ENCODE measurements at regions of chr2 and their contacts with region 1.

Region 1: DNA sequence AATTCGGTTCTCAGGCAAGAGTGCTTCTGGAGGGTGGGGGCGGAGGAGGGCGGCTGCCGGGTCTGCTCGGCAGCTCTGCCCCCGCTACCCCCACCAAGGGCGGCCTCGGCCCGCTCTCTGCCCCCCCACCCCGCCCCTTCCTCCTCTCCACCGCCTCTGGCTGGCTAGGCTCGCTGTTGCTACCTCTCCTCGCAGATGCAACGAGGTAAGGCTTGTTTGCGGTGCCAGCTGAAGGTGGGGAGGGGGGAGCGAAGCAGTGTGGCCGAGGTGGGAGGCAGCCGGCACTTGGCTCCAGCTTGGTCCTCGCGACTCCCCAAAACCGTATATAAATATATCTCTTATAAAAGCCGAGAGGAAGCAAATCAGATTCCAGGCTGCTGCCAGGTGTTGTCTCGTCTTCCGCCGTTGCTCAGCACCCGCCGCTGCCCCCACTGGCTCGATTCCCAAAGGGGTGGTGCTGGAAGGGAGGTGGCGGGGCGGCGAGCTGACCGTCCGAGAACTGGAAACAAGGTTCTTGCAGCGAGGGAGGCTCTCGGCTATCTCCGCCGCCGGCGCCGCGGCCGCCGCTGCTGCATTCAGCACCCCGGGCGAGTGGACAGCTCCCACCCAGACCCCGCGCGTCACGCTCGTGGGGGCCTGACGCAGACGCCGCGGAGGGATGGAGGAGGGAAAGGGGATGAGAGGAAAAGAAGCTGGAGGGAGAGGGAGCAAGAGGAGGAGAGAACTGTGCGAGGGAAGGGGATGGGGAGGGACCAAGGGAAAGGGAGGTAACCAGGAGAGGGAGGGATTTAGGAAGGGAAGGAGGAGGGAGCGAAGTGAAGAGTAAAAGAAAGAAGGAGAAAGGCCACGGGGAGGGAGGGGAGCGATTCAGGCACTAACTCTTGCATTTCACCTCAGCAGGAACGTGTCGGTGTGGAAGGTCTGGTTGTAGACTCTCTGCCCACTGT is at the start of gene MARCHF4:
- DNase-seq: peak; percentile 90
- ATAC-seq: peak; percentile 76
- H3K4me3 ChIP-seq: peak within 1 kb of the TSS; percentile 59
- H3K27ac ChIP-seq: peak within 1 kb of the TSS; percentile 74
- H3K4me1 ChIP-seq: peaks cover 6% of the 10 kb centered on the region
- H3K27me3 ChIP-seq: no peaks in the 10 kb centered on the region
- CTCF ChIP-seq: no peak
- POLR2A ChIP-seq: peak; percentile 27
- RAD21 ChIP-seq: peak; percentile 32
- total RNA-seq, gene MARCHF4: 2.3 and 3.1 TPM in 2 replicates

Region 2: DNA sequence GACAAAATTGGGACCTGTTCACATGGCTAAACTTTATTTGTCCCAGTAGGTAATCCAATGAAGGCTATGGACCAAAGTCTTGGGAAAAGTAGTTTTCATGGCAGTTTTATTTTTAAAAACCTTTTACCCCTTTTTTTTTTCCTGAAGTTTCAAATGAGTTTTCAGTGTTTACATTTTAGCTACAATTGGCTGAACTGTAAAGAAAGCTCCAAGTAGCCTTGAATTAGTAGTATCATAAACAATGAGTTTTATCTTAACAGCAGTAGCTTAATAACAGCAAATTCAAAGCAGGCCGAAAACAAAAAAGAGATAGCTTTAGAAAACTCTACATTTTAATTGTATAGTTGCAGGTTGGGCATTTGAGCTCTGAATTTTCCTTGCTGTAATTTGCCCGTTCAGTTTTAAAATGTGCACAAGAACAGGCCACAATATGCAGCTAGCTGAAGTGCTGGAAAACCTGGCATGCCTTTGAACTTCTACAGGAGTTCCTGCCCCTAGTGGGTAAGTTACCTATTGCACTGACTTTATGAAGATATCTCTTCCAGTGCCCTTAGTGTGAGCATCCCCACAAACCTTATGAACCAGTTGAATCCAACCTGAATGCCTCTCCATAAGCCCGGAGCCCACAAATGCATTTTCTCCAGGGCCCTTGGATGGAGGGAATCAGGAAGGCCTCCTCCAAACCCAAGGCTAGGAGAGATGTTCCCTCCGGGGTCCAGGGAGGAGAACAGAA is 156.2 kb before region 1 on chr2:
- CTCF ChIA-PET with region 1: no interaction called
- POLR2A ChIA-PET with region 1: no interaction called
- dilution Hi-C with region 1: no loop called
- in situ Hi-C with region 1: no loop called
- intact Hi-C with region 1: loop called (anchors 1 kb)
- DNase-seq: peak; percentile 40
- ATAC-seq: peak; percentile 48; the same call in 1 of the 2 replicates
- H3K4me3 ChIP-seq: no peak overlapping the region
- H3K27ac ChIP-seq: no peak overlapping the region
- H3K4me1 ChIP-seq: peaks cover 23% of the 10 kb centered on the region
- H3K27me3 ChIP-seq: no peaks in the 10 kb centered on the region
- CTCF ChIP-seq: peak; percentile 40
- POLR2A ChIP-seq: no peak
- RAD21 ChIP-seq: peak; percentile 30

Region 3: DNA sequence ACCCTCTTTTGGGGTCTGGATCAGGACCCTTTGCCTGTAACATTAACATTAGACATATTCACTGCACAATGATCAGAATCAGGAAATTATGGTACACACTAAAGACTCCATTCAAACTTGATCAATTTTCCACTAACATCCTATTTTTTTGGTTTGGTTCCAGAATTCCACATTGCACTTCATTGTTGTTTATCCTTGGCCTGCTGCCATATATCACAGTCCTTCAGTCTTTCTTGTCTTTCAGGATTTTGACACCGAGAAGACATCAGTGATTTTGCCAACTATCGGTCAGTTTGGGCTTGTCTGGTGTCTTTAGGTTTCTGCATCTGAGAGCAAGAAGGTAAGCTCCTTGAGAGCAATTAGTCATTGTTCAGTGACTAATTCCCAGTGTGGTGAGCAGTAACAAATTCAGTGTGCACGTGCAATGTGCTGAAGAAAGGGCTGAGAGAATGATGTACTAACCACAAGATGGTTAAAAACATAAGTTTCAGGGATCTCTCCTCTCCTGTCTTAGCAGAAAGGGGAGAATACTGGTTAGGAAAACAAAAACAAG is 23.2 kb before region 1 on chr2:
- CTCF ChIA-PET with region 1: no interaction called
- POLR2A ChIA-PET with region 1: interaction called, 3 read pairs
- dilution Hi-C with region 1: no loop called
- in situ Hi-C with region 1: no loop called
- intact Hi-C with region 1: loop called (anchors 2 kb)
- DNase-seq: peak; percentile 91
- ATAC-seq: peak; percentile 45; the same call in 1 of the 2 replicates
- H3K4me3 ChIP-seq: no peak overlapping the region
- H3K27ac ChIP-seq: no peak overlapping the region
- H3K4me1 ChIP-seq: peaks cover 26% of the 10 kb centered on the region
- H3K27me3 ChIP-seq: no peaks in the 10 kb centered on the region
- CTCF ChIP-seq: no peak
- POLR2A ChIP-seq: no peak
- RAD21 ChIP-seq: no peak

Region 4: GRCh38 chr2:216412022-216412999 is 40.3 kb after region 1 on chr2 and contains the start of gene SMARCAL1:
- CTCF ChIA-PET with region 1: no interaction called
- POLR2A ChIA-PET with region 1: no interaction called
- dilution Hi-C with region 1: no loop called
- in situ Hi-C with region 1: no loop called
- intact Hi-C with region 1: loop called (anchors 1 kb)
- DNase-seq: peak; percentile 97
- ATAC-seq: peak; percentile 96
- H3K4me3 ChIP-seq: peak within 1 kb of the TSS; percentile 66
- H3K27ac ChIP-seq: peak within 1 kb of the TSS; percentile 99
- H3K4me1 ChIP-seq: peaks cover 2% of the 10 kb centered on the region; the same call in 1 of the 2 replicates
- H3K27me3 ChIP-seq: no peaks in the 10 kb centered on the region
- CTCF ChIP-seq: no peak
- POLR2A ChIP-seq: no peak; the same call in 1 of the 2 replicates
- RAD21 ChIP-seq: no peak
- total RNA-seq, gene SMARCAL1: 10.8 and 13.6 TPM in 2 replicates

Region 5: GRCh38 chr2:216498418-216499413 is 126.7 kb after region 1 on chr2 and contains the start of gene RPL37A:
- CTCF ChIA-PET with region 1: no interaction called
- POLR2A ChIA-PET with region 1: no interaction called
- dilution Hi-C with region 1: no loop called
- in situ Hi-C with region 1: no loop called
- intact Hi-C with region 1: loop called (anchors 2 kb)
- DNase-seq: peak; percentile 96
- ATAC-seq: peak; percentile 90
- H3K4me3 ChIP-seq: peak within 1 kb of the TSS; percentile 92
- H3K27ac ChIP-seq: peak within 1 kb of the TSS; percentile 89
- H3K4me1 ChIP-seq: peaks cover 11% of the 10 kb centered on the region
- H3K27me3 ChIP-seq: no peaks in the 10 kb centered on the region
- CTCF ChIP-seq: no peak
- POLR2A ChIP-seq: peak; percentile 97
- RAD21 ChIP-seq: no peak
- total RNA-seq, gene RPL37A: 341 and 804 TPM in 2 replicates